SK-N-SH (cell line): ENCODE measurements at regions of chr14 and their contacts with region 1.

Region 1: DNA sequence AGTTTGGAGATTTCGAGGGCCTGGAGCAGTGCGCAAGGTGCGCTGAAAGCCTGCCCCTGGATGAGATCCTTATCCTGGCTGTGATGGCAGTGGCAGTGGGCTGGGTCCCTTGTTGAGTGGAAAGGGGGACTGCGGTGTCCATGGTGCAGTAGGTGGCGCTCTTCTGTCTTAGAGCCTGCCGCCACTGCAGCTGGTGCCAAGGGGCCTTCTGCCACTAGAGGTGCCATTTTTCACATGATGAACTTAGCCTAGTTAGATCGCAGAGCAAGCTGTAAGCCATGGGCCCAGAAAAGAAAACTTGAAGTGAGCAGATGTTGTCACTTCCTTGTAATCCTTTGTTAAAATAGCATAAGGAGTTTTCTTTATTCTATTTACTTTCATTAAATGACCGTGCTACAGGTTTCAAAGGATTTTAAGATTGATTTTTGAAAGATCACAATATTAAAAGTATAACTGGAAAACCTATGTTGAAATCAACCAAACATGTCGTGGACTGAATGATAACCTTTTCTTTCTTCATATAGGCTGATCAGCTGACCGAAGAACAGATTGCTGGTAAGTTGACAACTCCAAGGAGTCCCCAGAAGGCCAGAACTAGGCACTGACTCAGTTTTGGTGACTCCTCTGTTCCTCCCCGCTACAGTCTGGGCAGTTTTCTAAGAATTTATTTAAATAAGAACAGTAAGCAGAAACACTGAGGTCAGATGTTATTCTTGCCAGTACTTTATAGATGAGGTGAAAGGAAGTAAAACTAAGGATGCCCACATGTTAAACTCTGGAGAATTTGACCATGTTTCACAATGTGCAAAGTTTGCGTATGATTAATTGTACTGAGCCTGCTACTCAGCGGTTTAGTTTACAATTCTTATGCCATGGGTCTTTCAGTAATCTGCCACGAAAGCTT is 3.0 kb downstream of the CALM1 start:
- DNase-seq: peak; percentile 89
- H3K4me3 ChIP-seq: peak overlapping the region; percentile 86 to 99; a peak in 3 of 4 replicates
- H3K27ac ChIP-seq: peak overlapping the region in 1 of 2 experiments; percentile 86; a peak in 3 of 4 replicates
- H3K4me1 ChIP-seq: peaks cover 4 to 26% of the 10 kb centered on the region in 2 experiments; a peak in 3 of 4 replicates
- H3K27me3 ChIP-seq: no peaks in the 10 kb centered on the region
- CTCF ChIP-seq: peak; percentile 100
- EP300 ChIP-seq: peak in 1 of 2 experiments; percentile 26; a peak in 1 of 4 replicates
- RAD21 ChIP-seq: peak; percentile 99

Region 2: DNA sequence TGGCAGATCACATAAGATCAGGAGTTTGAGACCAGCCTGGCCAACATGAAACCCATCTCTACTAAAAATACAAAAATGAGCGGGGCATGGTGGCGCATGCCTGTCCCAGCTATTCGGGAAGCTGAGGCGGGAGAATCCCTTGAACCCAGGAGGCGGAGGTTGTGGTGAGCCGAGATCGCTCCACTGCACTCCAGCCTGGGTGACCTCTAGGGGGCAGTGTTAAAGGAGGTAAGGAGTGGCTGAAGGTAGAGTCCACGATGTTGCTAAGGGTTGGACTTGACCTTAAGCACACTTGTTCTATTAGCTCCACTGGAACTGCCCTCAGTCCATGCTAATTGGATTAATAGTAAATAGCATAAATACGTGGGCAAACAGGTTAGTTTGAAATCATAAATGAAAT is 205.9 kb before region 1 on chr14:
- CTCF ChIA-PET with region 1: no interaction called
- POLR2A ChIA-PET with region 1: no interaction called
- DNase-seq: peak; percentile 26
- H3K4me3 ChIP-seq: no peak overlapping the region
- H3K27ac ChIP-seq: no peak overlapping the region
- H3K4me1 ChIP-seq: no peaks in the 10 kb centered on the region; a peak in 1 of 4 replicates
- H3K27me3 ChIP-seq: no peaks in the 10 kb centered on the region
- CTCF ChIP-seq: peak; percentile 50
- EP300 ChIP-seq: no peak
- RAD21 ChIP-seq: no peak

Region 3: GRCh38 chr14:90321891-90322290 is 77.9 kb before region 1 on chr14:
- CTCF ChIA-PET with region 1: no interaction called
- POLR2A ChIA-PET with region 1: no interaction called
- DNase-seq: no peak
- H3K4me3 ChIP-seq: no peak overlapping the region
- H3K27ac ChIP-seq: no peak overlapping the region
- H3K4me1 ChIP-seq: no peaks in the 10 kb centered on the region
- H3K27me3 ChIP-seq: no peaks in the 10 kb centered on the region
- CTCF ChIP-seq: no peak
- EP300 ChIP-seq: no peak
- RAD21 ChIP-seq: no peak

Region 4: GRCh38 chr14:90368946-90369721 is 30.7 kb before region 1 on chr14:
- CTCF ChIA-PET with region 1: interaction called, 18 read pairs
- POLR2A ChIA-PET with region 1: no interaction called
- DNase-seq: peak; percentile 34
- H3K4me3 ChIP-seq: no peak overlapping the region
- H3K27ac ChIP-seq: peak overlapping the region in 1 of 2 experiments; percentile 48; a peak in 1 of 4 replicates
- H3K4me1 ChIP-seq: peaks cover 0 to 4% of the 10 kb centered on the region in 2 experiments; a peak in 3 of 4 replicates
- H3K27me3 ChIP-seq: no peaks in the 10 kb centered on the region
- CTCF ChIP-seq: peak; percentile 27
- EP300 ChIP-seq: no peak
- RAD21 ChIP-seq: peak; percentile 57

Region 5: DNA sequence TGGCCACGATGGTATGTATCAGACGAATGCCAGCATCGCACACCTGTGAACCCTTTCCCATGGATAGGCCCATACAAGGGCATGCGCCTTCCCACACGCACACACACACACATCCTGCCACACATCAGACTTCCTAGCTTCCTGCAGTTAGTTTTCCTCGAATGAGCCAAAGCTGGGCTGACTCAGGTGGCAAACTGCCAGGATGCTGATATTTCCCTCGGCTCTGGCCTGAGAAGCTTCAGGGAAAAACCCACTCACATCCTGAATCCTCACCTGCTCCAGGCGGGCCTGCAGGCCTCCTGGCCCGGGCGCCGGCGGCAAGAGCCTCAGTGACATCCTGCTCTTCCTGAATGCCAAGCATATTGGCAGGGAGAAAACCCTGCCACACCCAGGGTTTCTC is 19.4 kb after region 1 on chr14:
- CTCF ChIA-PET with region 1: interaction called, 27 read pairs
- POLR2A ChIA-PET with region 1: no interaction called
- DNase-seq: no peak
- H3K4me3 ChIP-seq: no peak overlapping the region
- H3K27ac ChIP-seq: peak overlapping the region in 1 of 2 experiments; percentile 74; a peak in 3 of 4 replicates
- H3K4me1 ChIP-seq: peaks cover 10 to 11% of the 10 kb centered on the region in 2 experiments; a peak in 3 of 4 replicates
- H3K27me3 ChIP-seq: no peaks in the 10 kb centered on the region
- CTCF ChIP-seq: no peak
- EP300 ChIP-seq: peak in 1 of 2 experiments; percentile 59; a peak in 1 of 4 replicates
- RAD21 ChIP-seq: no peak

Region 6: GRCh38 chr14:90454041-90455000 is 54.5 kb after region 1 on chr14:
- CTCF ChIA-PET with region 1: interaction called, 31 read pairs
- POLR2A ChIA-PET with region 1: interaction called, 13 read pairs
- DNase-seq: peak; percentile 95
- H3K4me3 ChIP-seq: peak overlapping the region; percentile 51 to 57; a peak in 3 of 4 replicates
- H3K27ac ChIP-seq: peak overlapping the region; percentile 24 to 98; a peak in 3 of 4 replicates
- H3K4me1 ChIP-seq: peaks cover 0 to 72% of the 10 kb centered on the region in 2 experiments; a peak in 2 of 4 replicates
- H3K27me3 ChIP-seq: no peaks in the 10 kb centered on the region
- CTCF ChIP-seq: no peak
- EP300 ChIP-seq: 0 out of 4 replicates have a peak, but pooled peaks of 1 of the 2 experiments have one; percentile 57
- RAD21 ChIP-seq: peak; percentile 37; the same call in 1 of the 2 replicates

Region 7: GRCh38 chr14:90518941-90519256 is 119.1 kb after region 1 on chr14:
- CTCF ChIA-PET with region 1: interaction called, 14 read pairs
- POLR2A ChIA-PET with region 1: interaction called, 8 read pairs
- DNase-seq: no peak
- H3K4me3 ChIP-seq: no peak overlapping the region
- H3K27ac ChIP-seq: no peak overlapping the region
- H3K4me1 ChIP-seq: peaks cover 20 to 41% of the 10 kb centered on the region in 2 experiments; a peak in 3 of 4 replicates
- H3K27me3 ChIP-seq: no peaks in the 10 kb centered on the region
- CTCF ChIP-seq: peak; percentile 58
- EP300 ChIP-seq: no peak
- RAD21 ChIP-seq: peak; percentile 66

Region 8: GRCh38 chr14:90607141-90607540 is 207.3 kb after region 1 on chr14:
- CTCF ChIA-PET with region 1: interaction called, 11 read pairs
- POLR2A ChIA-PET with region 1: no interaction called
- DNase-seq: no peak
- H3K4me3 ChIP-seq: no peak overlapping the region
- H3K27ac ChIP-seq: no peak overlapping the region
- H3K4me1 ChIP-seq: peaks cover 4 to 33% of the 10 kb centered on the region in 2 experiments; a peak in 3 of 4 replicates
- H3K27me3 ChIP-seq: no peaks in the 10 kb centered on the region
- CTCF ChIP-seq: no peak
- EP300 ChIP-seq: no peak
- RAD21 ChIP-seq: no peak

Region 9: GRCh38 chr14:90805662-90806540 is 406.1 kb after region 1 on chr14:
- CTCF ChIA-PET with region 1: no interaction called
- POLR2A ChIA-PET with region 1: no interaction called
- DNase-seq: no peak
- H3K4me3 ChIP-seq: no peak overlapping the region
- H3K27ac ChIP-seq: no peak overlapping the region
- H3K4me1 ChIP-seq: peaks cover 8 to 24% of the 10 kb centered on the region in 2 experiments; a peak in 2 of 4 replicates
- H3K27me3 ChIP-seq: no peaks in the 10 kb centered on the region
- CTCF ChIP-seq: no peak
- EP300 ChIP-seq: no peak
- RAD21 ChIP-seq: no peak